ENCODE measurements at regions of chr2 and their contacts with region 1.

Region 1: GRCh38 chr2:37993143-37993542 is 68.1 kb downstream of the RMDN2 start:
- DNase-seq: no peak
- H3K4me3 ChIP-seq: no peak overlapping the region
- H3K4me3 Mint-ChIP-seq: no peak overlapping the region
- H3K27ac ChIP-seq: no peak overlapping the region
- H3K27ac Mint-ChIP-seq: no peak overlapping the region
- H3K4me1 ChIP-seq: no peaks in the 10 kb centered on the region
- H3K4me1 Mint-ChIP-seq: no peaks in the 10 kb centered on the region
- H3K27me3 ChIP-seq: no peaks in the 10 kb centered on the region
- H3K27me3 Mint-ChIP-seq: no peaks in the 10 kb centered on the region

Region 2: DNA sequence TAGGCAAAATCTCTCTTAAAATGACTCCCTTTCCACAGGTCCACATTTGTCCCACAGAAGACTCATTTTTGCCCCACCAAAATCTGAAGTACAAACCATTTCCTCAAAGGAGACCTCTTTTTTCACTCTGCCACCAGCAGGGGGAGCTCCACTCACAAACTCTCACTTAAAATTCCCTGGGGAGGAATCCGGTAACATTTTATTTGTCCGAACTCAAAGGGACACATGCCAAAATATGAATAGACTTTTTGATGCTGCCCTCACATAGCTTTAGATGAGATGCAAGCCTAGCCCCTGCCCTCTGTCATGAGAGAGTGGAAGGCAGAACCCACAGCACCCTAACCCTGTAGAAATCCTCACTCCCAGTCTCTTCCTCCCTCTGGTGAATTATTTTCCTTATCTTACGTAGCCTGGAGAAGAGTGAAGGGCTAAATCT is 11.0 kb before region 1 on chr2:
- CTCF ChIA-PET with region 1: interaction called, 14 read pairs
- POLR2A ChIA-PET with region 1: no interaction called
- intact Hi-C with region 1: no loop called
- DNase-seq: peak in 4 of 5 donors; percentile 31 to 47 (median 32)
- H3K4me3 ChIP-seq: no peak overlapping the region
- H3K4me3 Mint-ChIP-seq: no peak overlapping the region
- H3K27ac ChIP-seq: no peak overlapping the region
- H3K27ac Mint-ChIP-seq: no peak overlapping the region
- H3K4me1 ChIP-seq: no peaks in the 10 kb centered on the region
- H3K4me1 Mint-ChIP-seq: peaks cover 0 to 3% (median 1%) of the 10 kb centered on the region in 4 donors
- H3K27me3 ChIP-seq: no peaks in the 10 kb centered on the region
- H3K27me3 Mint-ChIP-seq: no peaks in the 10 kb centered on the region

Region 3: GRCh38 chr2:38030635-38031355 is 37.7 kb after region 1 on chr2:
- CTCF ChIA-PET with region 1: no interaction called
- POLR2A ChIA-PET with region 1: no interaction called
- intact Hi-C with region 1: no loop called
- DNase-seq: no peak
- H3K4me3 ChIP-seq: no peak overlapping the region
- H3K4me3 Mint-ChIP-seq: no peak overlapping the region
- H3K27ac ChIP-seq: no peak overlapping the region
- H3K27ac Mint-ChIP-seq: no peak overlapping the region
- H3K4me1 ChIP-seq: no peaks in the 10 kb centered on the region
- H3K4me1 Mint-ChIP-seq: peaks cover 0 to 2% (median 0%) of the 10 kb centered on the region in 4 donors
- H3K27me3 ChIP-seq: peaks cover 7% of the 10 kb centered on the region
- H3K27me3 Mint-ChIP-seq: peaks cover 8 to 16% of the 10 kb centered on the region in 2 donors

Region 4: GRCh38 chr2:38634684-38635083 is 641.5 kb after region 1 on chr2:
- CTCF ChIA-PET with region 1: no interaction called
- POLR2A ChIA-PET with region 1: no interaction called
- intact Hi-C with region 1: no loop called
- DNase-seq: no peak
- H3K4me3 ChIP-seq: no peak overlapping the region
- H3K4me3 Mint-ChIP-seq: peak overlapping the region in 1 of 8 donors; percentile 13
- H3K27ac ChIP-seq: no peak overlapping the region
- H3K27ac Mint-ChIP-seq: peak overlapping the region in 1 of 7 donors; percentile 24
- H3K4me1 ChIP-seq: peaks cover 18% of the 10 kb centered on the region
- H3K4me1 Mint-ChIP-seq: peaks cover 10 to 16% (median 14%) of the 10 kb centered on the region in 4 donors
- H3K27me3 ChIP-seq: no peaks in the 10 kb centered on the region
- H3K27me3 Mint-ChIP-seq: no peaks in the 10 kb centered on the region

Measured in CD4-positive, alpha-beta memory T cell (primary cell).